GM18951 (cell line): ENCODE measurements at regions of chr19 and their contacts with region 1.

Region 1: GRCh38 chr19:38229585-38230073 is 5.6 kb upstream of the DPF1 start:
- POLR2A ChIP-seq: no peak

Region 2: DNA sequence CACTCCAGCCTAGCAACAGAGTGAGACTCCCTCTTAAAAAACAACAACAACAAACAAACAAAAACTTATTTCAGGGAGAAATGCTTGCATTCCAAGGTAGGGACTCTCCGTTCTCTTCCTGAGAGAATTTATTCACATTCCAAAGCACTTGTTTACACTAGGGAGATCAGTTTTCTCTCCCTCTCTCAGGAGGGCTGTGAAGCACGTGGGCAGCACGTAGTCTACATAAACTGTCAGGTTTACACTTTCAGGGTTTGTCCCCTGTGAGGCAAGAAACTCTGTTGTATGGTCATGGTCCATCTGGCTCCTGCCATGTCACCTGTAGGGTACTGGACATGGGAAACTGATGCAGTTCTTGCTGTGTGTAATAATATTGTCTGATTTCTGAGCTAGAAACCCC is 354.8 kb before region 1 on chr19:
- in situ Hi-C with region 1: loop called (anchors 25 kb)
- POLR2A ChIP-seq: no peak

Region 3: DNA sequence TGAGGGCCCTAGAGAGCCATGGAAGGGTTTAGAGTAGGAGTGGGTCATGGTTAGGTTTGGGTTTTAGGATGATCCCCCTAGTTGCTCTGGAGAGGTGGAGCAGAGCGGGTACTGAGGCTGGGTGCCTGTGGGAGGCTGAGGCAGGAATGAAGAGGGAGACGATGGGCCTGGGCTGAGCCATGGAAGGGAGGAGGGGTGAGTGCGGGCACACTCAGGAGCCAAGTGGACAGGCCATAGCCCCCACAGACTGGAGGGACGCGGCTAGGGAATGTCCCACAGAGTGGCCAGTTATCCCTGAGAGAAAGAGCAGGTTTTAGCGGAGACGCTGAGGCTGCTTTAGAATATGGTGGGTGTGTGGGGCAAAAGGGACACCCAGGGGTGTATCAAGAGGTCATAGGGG is 100.0 kb after region 1 on chr19:
- in situ Hi-C with region 1: loop called (anchors 5 kb)
- POLR2A ChIP-seq: no peak

Region 4: GRCh38 chr19:38351865-38352395 is 122.3 kb after region 1 on chr19:
- in situ Hi-C with region 1: loop called (anchors 10 kb)
- POLR2A ChIP-seq: no peak